CD8-positive, alpha-beta T cell (primary cell): ENCODE measurements at regions of chr3 and their contacts with region 1.

Region 1: DNA sequence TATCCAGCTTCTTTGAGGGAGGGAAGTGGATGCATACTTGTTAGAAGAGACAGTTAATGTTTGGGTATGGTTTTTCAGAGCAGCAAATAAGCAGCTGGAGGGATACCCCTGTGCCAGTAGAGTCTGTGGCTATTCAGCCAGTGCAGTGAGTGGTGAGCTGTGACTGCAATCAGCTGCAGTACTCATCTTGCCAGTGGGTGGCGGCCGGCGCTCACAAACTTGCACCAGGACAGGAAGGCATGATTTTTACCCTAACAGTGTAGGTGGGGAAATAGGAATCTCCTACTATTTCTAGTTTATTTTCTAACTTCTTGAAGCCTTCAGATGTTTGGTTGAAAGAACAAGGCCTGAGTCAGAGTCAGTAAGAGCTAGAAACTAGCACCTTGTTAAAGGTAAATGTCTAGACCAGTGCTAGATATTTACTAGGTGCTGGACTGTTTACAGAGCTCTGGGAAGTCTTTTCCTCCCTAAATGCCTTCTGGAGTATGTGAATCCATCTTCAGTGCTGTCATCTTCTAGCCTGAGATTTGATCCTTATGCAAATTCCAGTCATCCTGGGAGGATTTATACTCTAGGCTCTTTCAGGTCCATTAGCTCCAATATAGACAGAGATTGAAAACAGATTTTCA is 23.6 kb downstream of the TIMP4 start:
- DNase-seq: peak; percentile 12 to 66 (median 52)
- ATAC-seq: peak; percentile 75
- H3K4me3 ChIP-seq: no peak overlapping the region
- H3K4me3 Mint-ChIP-seq: no peak overlapping the region
- H3K27ac ChIP-seq: no peak overlapping the region
- H3K27ac Mint-ChIP-seq: no peak overlapping the region
- H3K4me1 ChIP-seq: no peaks in the 10 kb centered on the region
- H3K4me1 Mint-ChIP-seq: no peaks in the 10 kb centered on the region
- H3K27me3 ChIP-seq: no peaks in the 10 kb centered on the region
- H3K27me3 Mint-ChIP-seq: peaks cover 5% of the 10 kb centered on the region
- CTCF ChIP-seq: peak; percentile 63

Region 2: GRCh38 chr3:12175844-12176453 is 40.8 kb after region 1 on chr3:
- CTCF ChIA-PET with region 1: interaction called, 5 read pairs
- POLR2A ChIA-PET with region 1: no interaction called
- intact Hi-C with region 1: loop called in 1 of 2 experiments (anchors 1 kb)
- DNase-seq: peak in 4 of 9 experiments; percentile 12 to 51 (median 18)
- ATAC-seq: no peak
- H3K4me3 ChIP-seq: no peak overlapping the region
- H3K4me3 Mint-ChIP-seq: no peak overlapping the region
- H3K27ac ChIP-seq: no peak overlapping the region
- H3K27ac Mint-ChIP-seq: no peak overlapping the region
- H3K4me1 ChIP-seq: no peaks in the 10 kb centered on the region
- H3K4me1 Mint-ChIP-seq: no peaks in the 10 kb centered on the region
- H3K27me3 ChIP-seq: no peaks in the 10 kb centered on the region
- H3K27me3 Mint-ChIP-seq: no peaks in the 10 kb centered on the region
- CTCF ChIP-seq: no peak

Region 3: GRCh38 chr3:12536423-12536822 is 401.3 kb after region 1 on chr3:
- CTCF ChIA-PET with region 1: no interaction called
- POLR2A ChIA-PET with region 1: no interaction called
- intact Hi-C with region 1: loop called in 1 of 2 experiments (anchors 5 kb)
- DNase-seq: no peak
- ATAC-seq: no peak
- H3K4me3 ChIP-seq: no peak overlapping the region
- H3K4me3 Mint-ChIP-seq: no peak overlapping the region
- H3K27ac ChIP-seq: no peak overlapping the region
- H3K27ac Mint-ChIP-seq: no peak overlapping the region
- H3K4me1 ChIP-seq: no peaks in the 10 kb centered on the region
- H3K4me1 Mint-ChIP-seq: no peaks in the 10 kb centered on the region
- H3K27me3 ChIP-seq: no peaks in the 10 kb centered on the region
- H3K27me3 Mint-ChIP-seq: no peaks in the 10 kb centered on the region
- CTCF ChIP-seq: no peak